CD8-positive, alpha-beta T cell (primary cell): ENCODE measurements at regions of chr6 and their contacts with region 1.

Region 1: GRCh38 chr6:33579828-33580714 is at the start of gene BAK1:
- DNase-seq: peak; percentile 59 to 94 (median 85)
- ATAC-seq: peak; percentile 94
- H3K4me3 ChIP-seq: peak within 1 kb of the TSS; percentile 97 to 98
- H3K4me3 Mint-ChIP-seq: peak within 1 kb of the TSS; percentile 93
- H3K27ac ChIP-seq: peak within 1 kb of the TSS; percentile 85 to 87
- H3K27ac Mint-ChIP-seq: peak within 1 kb of the TSS; percentile 98
- H3K4me1 ChIP-seq: peaks cover 29% of the 10 kb centered on the region
- H3K4me1 Mint-ChIP-seq: peaks cover 31% of the 10 kb centered on the region
- H3K27me3 ChIP-seq: no peaks in the 10 kb centered on the region
- H3K27me3 Mint-ChIP-seq: no peaks in the 10 kb centered on the region
- CTCF ChIP-seq: peak; percentile 44
- total RNA-seq, gene BAK1: 44.8 to 46.5 TPM

Region 2: GRCh38 chr6:32853541-32854375 is 726.3 kb before region 1 on chr6 and contains the starts of genes PSMB9 and TAP1:
- CTCF ChIA-PET with region 1: no interaction called
- POLR2A ChIA-PET with region 1: no interaction called
- intact Hi-C with region 1: loop called in 1 of 2 experiments (anchors 10 kb)
- DNase-seq: peak; percentile 83 to 99 (median 94)
- ATAC-seq: peak; percentile 78
- H3K4me3 ChIP-seq: peak within 1 kb of the TSS; percentile 85 to 99
- H3K4me3 Mint-ChIP-seq: peak within 1 kb of the TSS; percentile 99
- H3K27ac ChIP-seq: peak within 1 kb of the TSS; percentile 98
- H3K27ac Mint-ChIP-seq: peak within 1 kb of the TSS; percentile 100
- H3K4me1 ChIP-seq: peaks cover 62% of the 10 kb centered on the region
- H3K4me1 Mint-ChIP-seq: peaks cover 69% of the 10 kb centered on the region
- H3K27me3 ChIP-seq: no peaks in the 10 kb centered on the region
- H3K27me3 Mint-ChIP-seq: no peaks in the 10 kb centered on the region
- CTCF ChIP-seq: peak; percentile 89
- total RNA-seq, gene PSMB9: 32.9 to 34.7 TPM
- total RNA-seq, gene TAP1: 98.0 to 98.1 TPM

Region 3: DNA sequence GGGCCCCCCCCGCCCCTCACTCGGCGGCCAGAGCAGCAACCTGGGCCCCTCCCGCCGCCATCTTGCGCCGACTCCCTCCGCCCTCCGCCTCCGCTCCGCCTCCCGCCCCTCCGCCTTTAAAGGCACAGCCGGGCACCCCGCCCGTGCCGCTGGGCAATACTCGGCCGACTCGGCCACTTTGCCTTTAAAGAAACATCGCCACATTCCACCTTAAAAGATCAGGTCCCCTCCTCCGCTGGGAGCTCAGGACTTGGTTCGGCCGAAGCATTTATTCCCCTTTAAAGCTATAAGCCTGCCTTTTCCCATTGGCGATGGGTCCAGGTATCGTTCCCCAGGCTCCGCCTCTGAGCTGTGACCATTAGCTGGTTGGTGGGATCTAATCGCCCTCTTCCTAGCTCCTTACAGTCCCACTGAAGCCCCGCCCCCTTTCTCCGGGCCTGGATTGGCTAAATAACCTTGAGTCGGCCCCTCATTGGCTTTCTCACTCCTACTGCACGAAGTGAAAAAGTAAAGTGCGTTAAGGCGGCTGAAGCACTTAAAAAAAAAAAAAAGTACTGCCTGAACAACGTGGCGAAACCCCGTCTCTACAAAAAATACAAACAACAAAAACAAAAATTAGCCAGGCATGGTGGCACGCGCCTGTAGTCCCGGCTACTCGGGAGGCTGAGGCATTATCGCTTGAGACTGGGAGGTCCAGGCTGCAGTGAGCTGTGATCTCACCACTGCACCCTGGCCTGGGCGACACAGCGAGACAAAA is 262.2 kb before region 1 on chr6 and contains the start of gene ZBTB22:
- CTCF ChIA-PET with region 1: no interaction called
- POLR2A ChIA-PET with region 1: no interaction called
- intact Hi-C with region 1: loop called in 1 of 2 experiments (anchors 10 kb)
- DNase-seq: peak; percentile 91 to 98 (median 96)
- ATAC-seq: peak; percentile 61
- H3K4me3 ChIP-seq: peak within 1 kb of the TSS; percentile 72 to 78
- H3K4me3 Mint-ChIP-seq: peak within 1 kb of the TSS; percentile 99
- H3K27ac ChIP-seq: peak within 1 kb of the TSS; percentile 60 to 99
- H3K27ac Mint-ChIP-seq: peak within 1 kb of the TSS; percentile 97
- H3K4me1 ChIP-seq: peaks cover 65% of the 10 kb centered on the region
- H3K4me1 Mint-ChIP-seq: peaks cover 77% of the 10 kb centered on the region
- H3K27me3 ChIP-seq: no peaks in the 10 kb centered on the region
- H3K27me3 Mint-ChIP-seq: no peaks in the 10 kb centered on the region
- CTCF ChIP-seq: no peak
- total RNA-seq, gene ZBTB22: 8.8 to 9.3 TPM

Region 4: DNA sequence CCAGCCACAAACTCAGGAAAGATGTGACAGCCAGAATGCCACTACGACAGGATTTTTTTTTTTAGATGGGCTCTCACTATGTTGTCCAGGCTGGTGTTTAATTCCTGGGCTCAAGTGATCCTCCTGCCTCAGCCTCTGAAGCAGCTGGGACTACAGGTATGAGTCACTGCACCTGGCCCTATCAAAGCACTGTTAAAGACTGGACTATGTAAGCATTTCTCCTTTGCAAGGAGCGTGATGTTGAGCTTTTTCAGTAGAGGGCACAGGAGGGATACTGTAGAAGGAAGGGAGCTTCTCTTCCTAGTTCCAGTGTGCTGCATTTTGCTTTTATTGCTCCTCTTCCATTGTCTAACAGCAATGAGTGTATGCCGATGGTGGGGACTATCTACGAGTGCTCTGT is 89.9 kb before region 1 on chr6:
- CTCF ChIA-PET with region 1: no interaction called
- POLR2A ChIA-PET with region 1: no interaction called
- intact Hi-C with region 1: no loop called
- DNase-seq: no peak
- ATAC-seq: no peak
- H3K4me3 ChIP-seq: no peak overlapping the region
- H3K4me3 Mint-ChIP-seq: no peak overlapping the region
- H3K27ac ChIP-seq: no peak overlapping the region
- H3K27ac Mint-ChIP-seq: no peak overlapping the region
- H3K4me1 ChIP-seq: no peaks in the 10 kb centered on the region
- H3K4me1 Mint-ChIP-seq: no peaks in the 10 kb centered on the region
- H3K27me3 ChIP-seq: no peaks in the 10 kb centered on the region
- H3K27me3 Mint-ChIP-seq: peaks cover 8% of the 10 kb centered on the region
- CTCF ChIP-seq: no peak

Region 5: GRCh38 chr6:33505548-33506370 is 74.3 kb before region 1 on chr6:
- CTCF ChIA-PET with region 1: no interaction called
- POLR2A ChIA-PET with region 1: no interaction called
- intact Hi-C with region 1: no loop called
- DNase-seq: no peak
- ATAC-seq: no peak
- H3K4me3 ChIP-seq: no peak overlapping the region
- H3K4me3 Mint-ChIP-seq: no peak overlapping the region
- H3K27ac ChIP-seq: no peak overlapping the region
- H3K27ac Mint-ChIP-seq: no peak overlapping the region
- H3K4me1 ChIP-seq: no peaks in the 10 kb centered on the region
- H3K4me1 Mint-ChIP-seq: no peaks in the 10 kb centered on the region
- H3K27me3 ChIP-seq: peaks cover 0 to 2% of the 10 kb centered on the region in 2 experiments
- H3K27me3 Mint-ChIP-seq: peaks cover 5% of the 10 kb centered on the region
- CTCF ChIP-seq: no peak

Region 6: GRCh38 chr6:33521489-33522091 is 58.5 kb before region 1 on chr6:
- CTCF ChIA-PET with region 1: no interaction called
- POLR2A ChIA-PET with region 1: no interaction called
- intact Hi-C with region 1: no loop called
- DNase-seq: no peak
- ATAC-seq: no peak
- H3K4me3 ChIP-seq: no peak overlapping the region
- H3K4me3 Mint-ChIP-seq: no peak overlapping the region
- H3K27ac ChIP-seq: no peak overlapping the region
- H3K27ac Mint-ChIP-seq: no peak overlapping the region
- H3K4me1 ChIP-seq: no peaks in the 10 kb centered on the region
- H3K4me1 Mint-ChIP-seq: no peaks in the 10 kb centered on the region
- H3K27me3 ChIP-seq: peaks cover 0 to 2% of the 10 kb centered on the region in 2 experiments
- H3K27me3 Mint-ChIP-seq: no peaks in the 10 kb centered on the region
- CTCF ChIP-seq: no peak

Region 7: GRCh38 chr6:33535104-33535603 is 44.9 kb before region 1 on chr6:
- CTCF ChIA-PET with region 1: interaction called, 3 read pairs
- POLR2A ChIA-PET with region 1: interaction called, 3 read pairs
- intact Hi-C with region 1: loop called in 1 of 2 experiments (anchors 2 kb)
- DNase-seq: no peak
- ATAC-seq: no peak
- H3K4me3 ChIP-seq: no peak overlapping the region
- H3K4me3 Mint-ChIP-seq: no peak overlapping the region
- H3K27ac ChIP-seq: no peak overlapping the region
- H3K27ac Mint-ChIP-seq: no peak overlapping the region
- H3K4me1 ChIP-seq: peaks cover 15% of the 10 kb centered on the region
- H3K4me1 Mint-ChIP-seq: peaks cover 18% of the 10 kb centered on the region
- H3K27me3 ChIP-seq: no peaks in the 10 kb centered on the region
- H3K27me3 Mint-ChIP-seq: no peaks in the 10 kb centered on the region
- CTCF ChIP-seq: no peak

Region 8: GRCh38 chr6:33700391-33701050 is 120.5 kb after region 1 on chr6:
- CTCF ChIA-PET with region 1: interaction called, 106 read pairs
- POLR2A ChIA-PET with region 1: interaction called, 4 read pairs
- intact Hi-C with region 1: loop called (anchors 1 kb)
- DNase-seq: peak; percentile 46 to 84 (median 78)
- ATAC-seq: peak; percentile 71
- H3K4me3 ChIP-seq: no peak overlapping the region
- H3K4me3 Mint-ChIP-seq: no peak overlapping the region
- H3K27ac ChIP-seq: peak overlapping the region in 1 of 2 experiments; percentile 48
- H3K27ac Mint-ChIP-seq: peak overlapping the region; percentile 60
- H3K4me1 ChIP-seq: peaks cover 31% of the 10 kb centered on the region
- H3K4me1 Mint-ChIP-seq: peaks cover 35% of the 10 kb centered on the region
- H3K27me3 ChIP-seq: no peaks in the 10 kb centered on the region
- H3K27me3 Mint-ChIP-seq: no peaks in the 10 kb centered on the region
- CTCF ChIP-seq: peak; percentile 63